GM10248 (cell line): ENCODE measurements at regions of chr9 and their contacts with region 1.

Region 1: GRCh38 chr9:124708633-124709291 is 62.3 kb downstream of the NR6A1 start:
- DNase-seq: no peak
- CTCF ChIP-seq: no peak

Region 2: GRCh38 chr9:124551472-124552272 is 157.1 kb before region 1 on chr9:
- CTCF ChIA-PET with region 1: interaction called, 22 read pairs
- POLR2A ChIA-PET with region 1: no interaction called
- DNase-seq: peak; percentile 44
- CTCF ChIP-seq: peak; percentile 52

Region 3: DNA sequence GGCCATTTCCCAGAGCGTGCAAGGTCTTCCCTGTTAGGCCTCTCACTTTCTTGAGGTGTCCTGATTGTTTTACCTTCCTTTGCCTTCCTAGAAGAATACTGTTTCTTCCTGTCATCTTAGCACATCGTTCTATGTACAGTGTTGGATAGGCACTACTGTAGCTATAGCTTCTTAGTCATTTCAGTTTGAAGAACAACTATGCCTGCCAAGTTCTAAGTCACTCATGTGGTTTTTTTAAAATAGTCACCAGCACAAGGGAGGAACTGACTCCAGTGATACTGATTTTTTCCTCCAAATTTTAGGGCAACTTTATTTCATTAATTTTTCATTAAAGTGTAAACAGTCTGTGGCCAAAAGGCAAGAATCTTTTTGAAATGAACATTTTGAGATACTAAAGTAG is 79.2 kb before region 1 on chr9:
- CTCF ChIA-PET with region 1: interaction called, 18 read pairs
- POLR2A ChIA-PET with region 1: no interaction called
- DNase-seq: no peak
- CTCF ChIP-seq: no peak

Region 4: DNA sequence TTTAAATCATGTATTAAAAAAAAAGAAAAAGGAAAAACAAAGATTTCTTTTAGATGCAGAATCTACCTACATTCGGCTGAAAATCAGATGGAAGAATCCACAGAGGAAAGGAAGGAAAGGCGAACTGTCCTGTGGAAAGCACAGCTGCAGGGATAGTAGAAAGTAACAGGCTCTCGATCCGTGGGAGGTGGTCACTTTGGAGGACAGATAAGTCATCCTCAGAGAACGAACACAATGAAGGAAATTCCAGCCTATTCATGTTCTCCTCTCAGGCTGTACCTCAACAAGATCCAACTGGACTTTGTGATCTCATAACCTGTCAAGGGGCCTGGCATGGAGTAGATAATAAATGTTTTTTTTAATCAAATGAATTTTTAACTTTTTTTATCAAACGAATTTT is 10.5 kb before region 1 on chr9:
- CTCF ChIA-PET with region 1: interaction called, 15 read pairs
- POLR2A ChIA-PET with region 1: no interaction called
- DNase-seq: no peak
- CTCF ChIP-seq: no peak

Region 5: DNA sequence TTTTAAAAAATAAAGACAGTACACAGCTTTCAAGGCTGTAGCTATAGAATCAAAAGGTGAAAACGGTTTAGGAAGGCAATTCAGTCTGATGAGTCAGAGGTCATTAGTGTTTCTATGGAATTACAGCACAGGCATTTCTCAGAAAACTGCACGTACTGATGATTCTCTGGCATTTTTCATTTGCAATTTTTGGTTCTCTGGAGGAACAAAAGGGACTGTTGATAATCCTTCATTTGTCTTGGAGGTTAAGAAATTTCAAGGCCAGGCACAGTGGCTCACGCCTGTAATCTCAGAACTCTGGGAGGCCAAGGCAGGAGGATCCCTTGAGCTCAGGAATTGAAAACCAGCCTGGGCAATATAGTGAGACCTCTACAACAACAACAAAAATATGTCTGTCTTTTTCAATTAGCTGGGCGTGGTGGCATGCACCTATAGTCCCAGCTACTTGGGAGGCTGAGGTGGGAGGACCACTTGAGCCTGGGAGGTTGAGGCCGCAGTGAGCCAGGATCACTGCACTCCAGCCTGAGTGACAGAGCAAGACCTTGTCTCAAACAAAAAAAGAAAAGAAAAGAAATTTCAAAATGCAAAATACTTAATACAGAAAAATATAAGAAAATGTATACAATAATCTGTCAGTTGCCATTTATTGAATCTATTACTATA is 35.1 kb after region 1 on chr9:
- CTCF ChIA-PET with region 1: interaction called, 15 read pairs
- POLR2A ChIA-PET with region 1: no interaction called
- DNase-seq: no peak
- CTCF ChIP-seq: no peak

Region 6: GRCh38 chr9:124771021-124771866 is 62.5 kb after region 1 on chr9 and contains the start of gene NR6A1:
- CTCF ChIA-PET with region 1: interaction called, 10 read pairs
- POLR2A ChIA-PET with region 1: no interaction called
- DNase-seq: peak; percentile 97
- CTCF ChIP-seq: no peak

Region 7: DNA sequence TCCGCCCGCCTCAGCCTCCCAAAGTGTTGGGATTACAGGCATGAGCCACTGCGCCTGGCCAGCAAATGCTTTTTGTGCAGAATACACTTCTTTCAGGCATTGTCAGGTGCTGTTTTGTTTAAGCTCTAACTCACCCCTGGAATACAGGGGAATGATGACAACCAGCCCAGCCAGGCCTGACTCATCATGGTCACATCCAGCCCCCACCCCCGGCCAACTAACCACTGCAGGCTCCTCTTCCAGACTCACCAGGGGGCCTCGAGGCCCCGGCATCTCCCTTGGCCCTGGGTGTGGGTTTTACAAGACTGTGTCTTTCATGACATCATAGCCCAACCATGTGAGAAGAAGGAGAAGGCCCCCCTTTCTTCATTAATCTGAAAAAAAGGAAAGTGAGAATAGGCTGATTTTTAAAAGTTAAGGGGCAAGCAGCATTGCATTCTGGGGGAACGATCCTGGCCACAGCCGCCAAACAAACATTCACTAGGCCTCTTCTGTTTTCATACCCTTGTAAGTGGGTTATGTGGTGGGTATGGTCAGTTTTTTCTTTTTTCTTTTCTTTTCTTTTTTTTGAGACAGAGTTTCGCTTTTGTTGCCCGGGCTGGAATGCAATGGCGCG is 103.7 kb after region 1 on chr9:
- CTCF ChIA-PET with region 1: no interaction called
- POLR2A ChIA-PET with region 1: no interaction called
- DNase-seq: no peak
- CTCF ChIP-seq: no peak

Region 8: DNA sequence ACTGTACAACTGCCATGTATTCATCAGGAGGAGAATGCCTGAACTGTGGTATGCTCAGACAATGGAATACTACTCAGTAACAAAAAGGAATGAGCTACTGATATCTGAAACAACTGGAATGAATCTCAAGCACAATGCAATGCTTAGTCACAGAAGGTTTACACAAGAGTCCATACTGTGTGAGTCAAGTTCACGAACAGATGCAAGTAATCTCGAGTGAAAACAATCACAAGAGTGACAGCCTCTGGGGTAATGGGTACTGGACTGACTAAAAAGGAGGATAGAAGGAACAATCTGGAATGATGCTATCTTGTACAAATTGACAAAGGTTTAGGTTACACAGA is 251.6 kb after region 1 on chr9:
- CTCF ChIA-PET with region 1: no interaction called
- POLR2A ChIA-PET with region 1: no interaction called
- DNase-seq: no peak
- CTCF ChIP-seq: no peak